ENCODE measurements at regions of chr17 and their contacts with region 1.

Region 1: GRCh38 chr17:58899065-58899590 is 143.5 kb downstream of the PPM1E start:
- DNase-seq: no peak
- ATAC-seq: no peak
- H3K4me3 ChIP-seq: no peak overlapping the region
- H3K27ac ChIP-seq: no peak overlapping the region
- H3K4me1 ChIP-seq: no peaks in the 10 kb centered on the region
- H3K27me3 ChIP-seq: no peaks in the 10 kb centered on the region
- CTCF ChIP-seq: no peak

Region 2: GRCh38 chr17:58831501-58832179 is 67.5 kb before region 1 on chr17:
- intact Hi-C with region 1: loop called in 1 of 10 experiments (anchors 10 kb)
- DNase-seq: no peak
- ATAC-seq: no peak
- H3K4me3 ChIP-seq: no peak overlapping the region
- H3K27ac ChIP-seq: no peak overlapping the region
- H3K4me1 ChIP-seq: no peaks in the 10 kb centered on the region
- H3K27me3 ChIP-seq: no peaks in the 10 kb centered on the region
- CTCF ChIP-seq: no peak

Region 3: GRCh38 chr17:58956997-58957720 is 58.0 kb after region 1 on chr17:
- intact Hi-C with region 1: loop called in 1 of 10 experiments (anchors 10 kb)
- DNase-seq: no peak
- ATAC-seq: no peak
- H3K4me3 ChIP-seq: no peak overlapping the region
- H3K27ac ChIP-seq: no peak overlapping the region
- H3K4me1 ChIP-seq: no peaks in the 10 kb centered on the region
- H3K27me3 ChIP-seq: no peaks in the 10 kb centered on the region
- CTCF ChIP-seq: no peak

Measured in heart right ventricle (tissue), 16 donors.